Naive thymus-derived CD4-positive, alpha-beta T cell (primary cell): ENCODE measurements at regions of chr14 and their contacts with region 1.

Region 1: GRCh38 chr14:65927931-65928356 is 515.4 kb downstream of the FUT8 start:
- DNase-seq: peak; percentile 31 to 77 (median 70)
- ATAC-seq: peak; percentile 92
- H3K4me3 ChIP-seq: peak overlapping the region; percentile 5
- H3K4me3 Mint-ChIP-seq: peak overlapping the region; percentile 68 to 80 (median 73)
- H3K27ac ChIP-seq: peak overlapping the region; percentile 52
- H3K27ac Mint-ChIP-seq: peak overlapping the region; percentile 84 to 98 (median 92)
- H3K4me1 ChIP-seq: peaks cover 47 to 51% of the 10 kb centered on the region in 2 donors
- H3K4me1 Mint-ChIP-seq: peaks cover 45 to 72% (median 61%) of the 10 kb centered on the region in 7 donors
- H3K27me3 ChIP-seq: no peaks in the 10 kb centered on the region
- H3K27me3 Mint-ChIP-seq: no peaks in the 10 kb centered on the region

Region 2: GRCh38 chr14:65137648-65138307 is 790.2 kb before region 1 on chr14:
- CTCF ChIA-PET with region 1: no interaction called
- POLR2A ChIA-PET with region 1: no interaction called
- intact Hi-C with region 1: no loop called
- DNase-seq: no peak
- ATAC-seq: no peak
- H3K4me3 ChIP-seq: no peak overlapping the region
- H3K4me3 Mint-ChIP-seq: no peak overlapping the region
- H3K27ac ChIP-seq: no peak overlapping the region
- H3K27ac Mint-ChIP-seq: no peak overlapping the region
- H3K4me1 ChIP-seq: no peaks in the 10 kb centered on the region
- H3K4me1 Mint-ChIP-seq: peaks cover 4 to 21% (median 6%) of the 10 kb centered on the region in 7 donors
- H3K27me3 ChIP-seq: no peaks in the 10 kb centered on the region
- H3K27me3 Mint-ChIP-seq: peaks cover 0 to 4% (median 0%) of the 10 kb centered on the region in 5 donors

Region 3: GRCh38 chr14:65281991-65282895 is 645.7 kb before region 1 on chr14:
- CTCF ChIA-PET with region 1: no interaction called
- POLR2A ChIA-PET with region 1: no interaction called
- intact Hi-C with region 1: loop called in 1 of 2 experiments (anchors 2 kb)
- DNase-seq: peak in 3 of 9 donors; percentile 23 to 28 (median 27)
- ATAC-seq: peak; percentile 52
- H3K4me3 ChIP-seq: peak overlapping the region; percentile 33
- H3K4me3 Mint-ChIP-seq: peak overlapping the region; percentile 62 to 86 (median 82)
- H3K27ac ChIP-seq: peak overlapping the region; percentile 58
- H3K27ac Mint-ChIP-seq: peak overlapping the region; percentile 81 to 97 (median 87)
- H3K4me1 ChIP-seq: peaks cover 23% of the 10 kb centered on the region in 2 donors
- H3K4me1 Mint-ChIP-seq: peaks cover 30 to 52% (median 38%) of the 10 kb centered on the region in 7 donors
- H3K27me3 ChIP-seq: no peaks in the 10 kb centered on the region
- H3K27me3 Mint-ChIP-seq: no peaks in the 10 kb centered on the region

Region 4: DNA sequence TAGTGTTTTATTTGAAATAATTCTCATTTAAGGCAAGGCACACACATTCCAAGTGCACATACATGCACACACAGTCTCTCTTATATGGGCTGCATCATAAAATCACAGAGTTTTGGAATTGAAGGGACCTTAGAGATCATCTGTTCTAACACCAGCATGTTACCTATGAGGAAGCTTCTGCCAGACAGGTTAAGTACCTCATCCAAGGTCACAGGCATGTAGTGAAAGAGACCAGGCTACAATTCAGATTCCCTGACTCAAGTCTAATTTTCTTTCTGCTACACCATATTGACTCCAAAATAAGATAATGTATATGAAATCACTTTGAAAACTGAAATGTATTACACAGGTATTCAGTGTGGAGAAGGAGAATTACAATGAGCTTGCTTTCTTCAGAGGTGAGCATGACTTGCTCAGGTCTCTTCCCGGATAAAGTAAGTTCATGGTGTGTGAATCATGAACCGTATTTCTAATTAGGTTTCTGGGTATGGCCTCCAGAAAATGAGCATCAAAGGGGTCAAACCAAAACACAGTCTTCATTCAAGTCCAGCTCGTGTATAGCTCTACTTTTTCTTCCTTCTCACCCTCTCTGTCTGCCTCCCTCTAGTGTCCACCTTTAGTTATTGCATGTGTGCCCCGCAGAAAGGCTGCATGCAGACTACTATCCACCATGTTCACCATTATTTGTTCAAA is 103.5 kb before region 1 on chr14:
- CTCF ChIA-PET with region 1: interaction called, 10 read pairs
- POLR2A ChIA-PET with region 1: no interaction called
- intact Hi-C with region 1: loop called in 1 of 2 experiments (anchors 1 kb)
- DNase-seq: peak in 8 of 9 donors; percentile 38 to 71 (median 60)
- ATAC-seq: peak; percentile 93
- H3K4me3 ChIP-seq: no peak overlapping the region
- H3K4me3 Mint-ChIP-seq: peak overlapping the region in 1 of 10 donors; percentile 39
- H3K27ac ChIP-seq: no peak overlapping the region
- H3K27ac Mint-ChIP-seq: peak overlapping the region in 3 of 9 donors; percentile 0 to 66 (median 66)
- H3K4me1 ChIP-seq: peaks cover 6 to 8% of the 10 kb centered on the region in 2 donors
- H3K4me1 Mint-ChIP-seq: peaks cover 3 to 33% (median 14%) of the 10 kb centered on the region in 7 donors
- H3K27me3 ChIP-seq: no peaks in the 10 kb centered on the region
- H3K27me3 Mint-ChIP-seq: peaks cover 0 to 7% (median 0%) of the 10 kb centered on the region in 5 donors

Region 5: GRCh38 chr14:65860956-65861611 is 66.9 kb before region 1 on chr14:
- CTCF ChIA-PET with region 1: interaction called, 7 read pairs
- POLR2A ChIA-PET with region 1: interaction called, 6 read pairs
- intact Hi-C with region 1: loop called in 1 of 2 experiments (anchors 1 kb)
- DNase-seq: peak in 7 of 9 donors; percentile 22 to 64 (median 49)
- ATAC-seq: peak; percentile 62
- H3K4me3 ChIP-seq: no peak overlapping the region
- H3K4me3 Mint-ChIP-seq: peak overlapping the region; percentile 12 to 78 (median 61)
- H3K27ac ChIP-seq: no peak overlapping the region
- H3K27ac Mint-ChIP-seq: peak overlapping the region; percentile 69 to 85 (median 78)
- H3K4me1 ChIP-seq: peaks cover 18 to 53% of the 10 kb centered on the region in 2 donors
- H3K4me1 Mint-ChIP-seq: peaks cover 41 to 73% (median 66%) of the 10 kb centered on the region in 7 donors
- H3K27me3 ChIP-seq: no peaks in the 10 kb centered on the region
- H3K27me3 Mint-ChIP-seq: peaks cover 0 to 1% (median 0%) of the 10 kb centered on the region in 5 donors

Region 6: GRCh38 chr14:65879248-65880009 is 48.5 kb before region 1 on chr14:
- CTCF ChIA-PET with region 1: interaction called, 3 read pairs
- POLR2A ChIA-PET with region 1: interaction called, 4 read pairs
- intact Hi-C with region 1: loop called (anchors 2 to 5 kb)
- DNase-seq: no peak
- ATAC-seq: peak; percentile 26
- H3K4me3 ChIP-seq: no peak overlapping the region
- H3K4me3 Mint-ChIP-seq: peak overlapping the region in 1 of 10 donors; percentile 52
- H3K27ac ChIP-seq: no peak overlapping the region
- H3K27ac Mint-ChIP-seq: peak overlapping the region in 7 of 9 donors; percentile 17 to 89 (median 37)
- H3K4me1 ChIP-seq: peaks cover 0 to 27% of the 10 kb centered on the region in 2 donors
- H3K4me1 Mint-ChIP-seq: peaks cover 5 to 35% (median 26%) of the 10 kb centered on the region in 7 donors
- H3K27me3 ChIP-seq: no peaks in the 10 kb centered on the region
- H3K27me3 Mint-ChIP-seq: peaks cover 0 to 4% (median 0%) of the 10 kb centered on the region in 5 donors

Region 7: DNA sequence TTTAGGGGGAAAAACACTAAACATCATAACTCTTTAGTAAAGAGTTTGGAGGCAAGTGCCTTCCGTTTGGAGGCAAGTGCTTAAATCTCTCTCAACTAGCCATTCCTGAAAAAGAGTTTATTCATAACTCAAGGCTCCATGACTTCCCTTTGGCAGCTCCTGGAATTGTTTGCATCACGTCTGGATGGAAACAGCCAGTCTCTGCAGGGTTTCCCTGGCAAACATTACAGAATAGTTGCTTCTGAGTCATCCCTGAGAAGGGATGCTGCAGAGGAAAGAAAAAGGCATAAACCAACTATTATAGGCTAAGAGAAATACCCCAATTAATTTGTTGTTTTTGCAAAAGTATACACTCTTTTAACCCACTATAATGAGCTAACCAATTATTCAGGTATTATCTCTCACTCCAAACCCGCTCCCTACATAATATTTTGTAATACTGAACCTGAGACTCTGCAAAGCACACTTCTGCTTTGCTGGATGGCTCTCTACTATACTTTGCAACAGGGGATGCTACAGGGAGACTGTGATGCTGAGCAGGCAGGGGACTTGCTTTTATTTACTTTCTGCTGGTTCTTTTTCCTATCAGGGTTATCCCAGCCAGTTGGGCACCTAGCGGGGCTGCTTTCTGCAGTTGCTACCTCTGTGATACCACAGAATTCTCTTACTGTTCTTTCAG is 17.7 kb before region 1 on chr14:
- CTCF ChIA-PET with region 1: interaction called, 3 read pairs
- POLR2A ChIA-PET with region 1: interaction called, 12 read pairs
- intact Hi-C with region 1: no loop called
- DNase-seq: no peak
- ATAC-seq: no peak
- H3K4me3 ChIP-seq: no peak overlapping the region
- H3K4me3 Mint-ChIP-seq: no peak overlapping the region
- H3K27ac ChIP-seq: no peak overlapping the region
- H3K27ac Mint-ChIP-seq: peak overlapping the region in 1 of 9 donors; percentile 15
- H3K4me1 ChIP-seq: peaks cover 0 to 8% of the 10 kb centered on the region in 2 donors
- H3K4me1 Mint-ChIP-seq: peaks cover 14 to 64% (median 56%) of the 10 kb centered on the region in 7 donors
- H3K27me3 ChIP-seq: no peaks in the 10 kb centered on the region
- H3K27me3 Mint-ChIP-seq: peaks cover 0 to 24% (median 0%) of the 10 kb centered on the region in 5 donors

Region 8: GRCh38 chr14:65949711-65950516 is 22.0 kb after region 1 on chr14:
- CTCF ChIA-PET with region 1: interaction called, 3 read pairs
- POLR2A ChIA-PET with region 1: interaction called, 3 read pairs
- intact Hi-C with region 1: loop called in 1 of 2 experiments (anchors 1 kb)
- DNase-seq: peak in 1 of 9 donors; percentile 37
- ATAC-seq: no peak
- H3K4me3 ChIP-seq: no peak overlapping the region
- H3K4me3 Mint-ChIP-seq: peak overlapping the region in 5 of 10 donors; percentile 0 to 59 (median 11)
- H3K27ac ChIP-seq: no peak overlapping the region
- H3K27ac Mint-ChIP-seq: peak overlapping the region in 5 of 9 donors; percentile 28 to 85 (median 43)
- H3K4me1 ChIP-seq: peaks cover 12 to 13% of the 10 kb centered on the region in 2 donors
- H3K4me1 Mint-ChIP-seq: peaks cover 28 to 56% (median 35%) of the 10 kb centered on the region in 7 donors
- H3K27me3 ChIP-seq: no peaks in the 10 kb centered on the region
- H3K27me3 Mint-ChIP-seq: no peaks in the 10 kb centered on the region